ENCODE measurements at regions of chr10 and their contacts with region 1.

Region 1: GRCh38 chr10:35126530-35127296 is at the start of gene CREM:
- DNase-seq: peak; percentile 98 to 100 (median 99)
- ATAC-seq: peak; percentile 90
- H3K4me3 ChIP-seq: peak within 1 kb of the TSS; percentile 84
- H3K4me3 Mint-ChIP-seq: peak within 1 kb of the TSS; percentile 63 to 93 (median 91)
- H3K27ac ChIP-seq: peak within 1 kb of the TSS; percentile 100
- H3K27ac Mint-ChIP-seq: peak within 1 kb of the TSS; percentile 85 to 99 (median 95)
- H3K4me1 ChIP-seq: peaks cover 17 to 20% of the 10 kb centered on the region in 2 donors
- H3K4me1 Mint-ChIP-seq: peaks cover 16 to 61% (median 47%) of the 10 kb centered on the region in 7 donors
- H3K27me3 ChIP-seq: no peaks in the 10 kb centered on the region
- H3K27me3 Mint-ChIP-seq: no peaks in the 10 kb centered on the region
- total RNA-seq, gene CREM: 13.3 to 76.2 (median 31.6) TPM

Region 2: DNA sequence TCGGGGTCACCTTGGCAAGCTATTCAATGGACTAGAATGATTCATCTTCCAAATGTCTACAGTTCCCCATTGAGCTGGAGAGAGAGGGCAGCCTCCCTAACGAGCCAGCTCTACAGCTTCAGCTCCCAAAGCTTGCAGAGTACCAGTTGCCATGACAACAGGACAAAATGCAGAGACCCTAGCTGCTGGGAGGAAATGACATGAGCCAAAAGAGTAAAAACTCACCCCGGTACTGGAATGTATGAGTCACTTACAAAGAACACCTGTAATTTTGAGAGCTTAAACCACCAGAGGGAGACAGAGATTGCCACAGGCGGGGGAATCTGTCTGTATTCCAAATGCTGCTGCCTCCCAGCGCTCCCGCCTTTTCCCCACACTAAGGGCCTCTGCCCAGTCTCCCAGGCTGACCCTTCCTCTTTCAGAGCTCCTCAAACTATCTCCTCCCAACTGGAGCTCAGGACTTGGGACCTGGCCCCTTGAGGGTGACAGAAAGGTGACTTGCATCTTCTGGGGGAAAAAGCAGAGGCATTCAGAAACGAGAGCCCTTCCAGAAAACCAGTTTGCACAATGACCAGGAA is 132.1 kb before region 1 on chr10:
- CTCF ChIA-PET with region 1: interaction called, 3 read pairs
- POLR2A ChIA-PET with region 1: no interaction called
- intact Hi-C with region 1: loop called in 1 of 2 experiments (anchors 10 kb)
- DNase-seq: peak in 8 of 9 donors; percentile 18 to 78 (median 50)
- ATAC-seq: peak; percentile 71
- H3K4me3 ChIP-seq: no peak overlapping the region
- H3K4me3 Mint-ChIP-seq: no peak overlapping the region
- H3K27ac ChIP-seq: no peak overlapping the region
- H3K27ac Mint-ChIP-seq: peak overlapping the region in 6 of 9 donors; percentile 28 to 83 (median 56)
- H3K4me1 ChIP-seq: peaks cover 0 to 8% of the 10 kb centered on the region in 2 donors
- H3K4me1 Mint-ChIP-seq: peaks cover 0 to 17% (median 10%) of the 10 kb centered on the region in 7 donors
- H3K27me3 ChIP-seq: no peaks in the 10 kb centered on the region
- H3K27me3 Mint-ChIP-seq: no peaks in the 10 kb centered on the region

Region 3: DNA sequence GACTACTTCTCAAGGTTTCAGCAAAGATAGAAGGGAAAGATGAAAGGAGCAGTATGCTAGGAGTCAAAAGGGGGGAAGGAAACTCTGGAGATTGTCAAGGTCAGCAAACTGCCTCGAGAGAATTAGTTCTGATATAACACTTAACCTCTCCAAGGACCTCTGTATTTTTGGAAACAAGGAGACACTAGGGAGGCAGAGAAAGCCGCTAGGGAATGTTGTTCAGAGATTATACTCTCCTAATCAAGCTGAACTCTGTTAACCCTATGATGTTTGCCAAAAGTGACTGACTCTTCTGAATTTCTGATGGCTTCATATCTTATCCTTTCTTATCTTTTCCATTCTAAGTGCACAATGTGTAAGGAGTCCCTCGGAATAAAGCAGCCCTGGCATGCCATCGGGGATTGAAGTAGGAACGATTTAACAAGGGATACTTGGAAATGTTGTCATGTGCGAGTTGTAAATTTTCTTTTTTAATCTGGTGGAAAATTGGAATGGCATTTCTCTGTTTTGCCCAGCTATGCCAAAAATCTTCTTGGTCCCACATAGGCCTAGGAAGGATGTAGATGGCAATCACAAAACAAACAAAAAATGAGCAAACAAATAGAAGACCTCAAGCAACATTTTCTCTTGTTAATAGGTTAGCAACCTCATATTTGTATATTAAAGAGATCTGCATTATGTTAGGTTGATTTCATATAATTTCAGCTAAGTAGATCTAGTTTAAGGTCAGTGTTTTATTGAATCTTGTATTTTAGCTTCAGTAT is 27.2 kb after region 1 on chr10:
- CTCF ChIA-PET with region 1: no interaction called
- POLR2A ChIA-PET with region 1: interaction called, 6 read pairs
- intact Hi-C with region 1: loop called (anchors 1 kb)
- DNase-seq: no peak
- ATAC-seq: no peak
- H3K4me3 ChIP-seq: no peak overlapping the region
- H3K4me3 Mint-ChIP-seq: no peak overlapping the region
- H3K27ac ChIP-seq: no peak overlapping the region
- H3K27ac Mint-ChIP-seq: no peak overlapping the region
- H3K4me1 ChIP-seq: peaks cover 9 to 14% of the 10 kb centered on the region in 2 donors
- H3K4me1 Mint-ChIP-seq: peaks cover 17 to 36% (median 21%) of the 10 kb centered on the region in 7 donors
- H3K27me3 ChIP-seq: no peaks in the 10 kb centered on the region
- H3K27me3 Mint-ChIP-seq: no peaks in the 10 kb centered on the region

Region 4: GRCh38 chr10:35218339-35218955 is 91.7 kb after region 1 on chr10:
- CTCF ChIA-PET with region 1: interaction called, 118 read pairs
- POLR2A ChIA-PET with region 1: interaction called, 6 read pairs
- intact Hi-C with region 1: loop called in 1 of 2 experiments (anchors 1 kb)
- DNase-seq: peak; percentile 58 to 83 (median 76)
- ATAC-seq: peak; percentile 94
- H3K4me3 ChIP-seq: no peak overlapping the region
- H3K4me3 Mint-ChIP-seq: peak overlapping the region in 8 of 10 donors; percentile 33 to 79 (median 62)
- H3K27ac ChIP-seq: no peak overlapping the region
- H3K27ac Mint-ChIP-seq: peak overlapping the region; percentile 16 to 96 (median 77)
- H3K4me1 ChIP-seq: no peaks in the 10 kb centered on the region
- H3K4me1 Mint-ChIP-seq: peaks cover 5 to 47% (median 10%) of the 10 kb centered on the region in 7 donors
- H3K27me3 ChIP-seq: no peaks in the 10 kb centered on the region
- H3K27me3 Mint-ChIP-seq: no peaks in the 10 kb centered on the region

Region 5: DNA sequence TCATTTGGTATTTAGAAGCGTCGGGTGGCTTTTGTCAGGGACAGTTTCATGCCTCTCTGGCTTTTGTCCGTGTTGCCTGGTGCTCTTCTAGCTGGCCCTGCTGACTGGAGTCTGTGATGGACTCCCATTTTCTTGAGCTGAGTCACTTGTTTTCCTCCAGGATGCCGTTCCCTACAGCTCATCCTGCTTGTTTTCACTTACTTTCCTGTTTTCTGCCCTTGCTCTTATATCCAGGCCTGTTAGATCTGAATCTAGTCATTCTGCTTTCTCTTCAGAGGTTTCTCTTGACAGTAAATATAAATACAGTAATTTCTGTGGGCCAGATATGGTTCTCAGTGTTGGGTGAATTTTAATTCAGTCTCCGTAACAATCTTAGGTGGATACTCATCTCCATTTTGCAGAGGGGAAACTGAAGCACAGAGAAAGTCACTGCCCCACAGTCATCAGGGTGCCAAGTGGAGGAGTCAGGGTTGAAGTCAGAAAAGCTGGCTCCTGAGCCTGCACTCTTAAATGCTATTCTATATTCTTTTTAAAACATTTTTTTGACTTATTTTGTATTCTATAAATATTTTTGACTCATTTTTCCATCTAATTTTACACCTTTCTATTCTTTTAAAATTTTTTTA is 295.0 kb after region 1 on chr10:
- CTCF ChIA-PET with region 1: no interaction called
- POLR2A ChIA-PET with region 1: no interaction called
- intact Hi-C with region 1: no loop called
- DNase-seq: no peak
- ATAC-seq: no peak
- H3K4me3 ChIP-seq: no peak overlapping the region
- H3K4me3 Mint-ChIP-seq: peak overlapping the region in 2 of 10 donors; percentile 18 to 48
- H3K27ac ChIP-seq: no peak overlapping the region
- H3K27ac Mint-ChIP-seq: peak overlapping the region in 2 of 9 donors; percentile 52 to 53
- H3K4me1 ChIP-seq: peaks cover 0 to 14% of the 10 kb centered on the region in 2 donors
- H3K4me1 Mint-ChIP-seq: peaks cover 12 to 82% (median 44%) of the 10 kb centered on the region in 7 donors
- H3K27me3 ChIP-seq: no peaks in the 10 kb centered on the region
- H3K27me3 Mint-ChIP-seq: no peaks in the 10 kb centered on the region

Region 6: GRCh38 chr10:35563261-35563891 is 436.7 kb after region 1 on chr10:
- CTCF ChIA-PET with region 1: interaction called, 9 read pairs
- POLR2A ChIA-PET with region 1: no interaction called
- intact Hi-C with region 1: loop called in 1 of 2 experiments (anchors 2 kb)
- DNase-seq: peak in 6 of 9 donors; percentile 25 to 40 (median 34)
- ATAC-seq: peak; percentile 67
- H3K4me3 ChIP-seq: no peak overlapping the region
- H3K4me3 Mint-ChIP-seq: no peak overlapping the region
- H3K27ac ChIP-seq: no peak overlapping the region
- H3K27ac Mint-ChIP-seq: peak overlapping the region in 4 of 9 donors; percentile 4 to 72 (median 30)
- H3K4me1 ChIP-seq: no peaks in the 10 kb centered on the region
- H3K4me1 Mint-ChIP-seq: peaks cover 0 to 16% (median 5%) of the 10 kb centered on the region in 7 donors
- H3K27me3 ChIP-seq: no peaks in the 10 kb centered on the region
- H3K27me3 Mint-ChIP-seq: no peaks in the 10 kb centered on the region

Measured in naive thymus-derived CD4-positive, alpha-beta T cell (primary cell).